Left lung (tissue), 14 donors: ENCODE measurements at regions of chr5 and their contacts with region 1.

Region 1: DNA sequence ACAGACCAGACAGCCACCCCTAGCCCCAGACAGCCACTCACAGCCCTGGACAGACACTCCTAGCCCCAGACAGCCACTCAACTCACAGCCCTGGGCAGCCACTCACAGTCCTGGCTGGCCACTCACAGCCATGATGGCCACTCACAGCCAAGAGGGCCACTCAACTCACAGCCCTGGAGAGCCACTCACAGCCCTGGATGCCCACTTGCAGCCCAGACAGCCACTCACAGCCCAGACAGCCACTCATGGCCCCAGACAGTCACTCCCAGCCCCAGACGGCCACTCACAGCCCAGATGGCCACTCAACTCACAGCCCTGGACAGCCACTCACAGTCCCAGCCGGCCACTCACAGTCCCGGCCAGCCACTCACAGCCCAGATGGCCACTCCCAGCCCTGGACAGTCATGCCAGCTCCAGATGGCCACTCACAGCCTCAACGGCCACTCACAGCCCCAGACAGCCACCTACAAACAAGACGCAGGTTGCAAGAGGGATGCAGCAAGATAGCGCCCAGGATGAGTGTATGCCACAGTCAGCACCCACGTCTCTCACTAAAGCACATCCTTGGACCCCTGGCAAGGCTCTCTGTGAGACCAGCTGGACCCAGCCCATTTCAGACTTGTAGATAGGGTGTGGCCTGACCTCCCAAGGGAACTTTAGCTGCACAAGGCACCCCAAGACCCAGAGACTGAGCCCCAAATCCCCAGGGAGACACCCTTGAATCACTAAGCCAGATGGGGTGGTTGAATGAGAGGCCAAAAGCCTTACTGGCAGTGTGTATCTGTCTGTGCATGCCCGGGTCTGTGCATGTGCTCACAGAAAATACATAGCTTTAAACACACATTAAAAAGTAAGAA is 22.4 kb downstream of the ZDHHC11B start:
- DNase-seq: peak in 2 of 4 donors; percentile 88 to 93
- ATAC-seq: peak; percentile 73
- H3K4me3 ChIP-seq: no peak overlapping the region
- H3K27ac ChIP-seq: peak overlapping the region in 1 of 2 donors; percentile 37
- H3K4me1 ChIP-seq: peaks cover 28 to 30% of the 10 kb centered on the region in 2 donors
- H3K27me3 ChIP-seq: no peaks in the 10 kb centered on the region
- CTCF ChIP-seq: no peak

Region 2: DNA sequence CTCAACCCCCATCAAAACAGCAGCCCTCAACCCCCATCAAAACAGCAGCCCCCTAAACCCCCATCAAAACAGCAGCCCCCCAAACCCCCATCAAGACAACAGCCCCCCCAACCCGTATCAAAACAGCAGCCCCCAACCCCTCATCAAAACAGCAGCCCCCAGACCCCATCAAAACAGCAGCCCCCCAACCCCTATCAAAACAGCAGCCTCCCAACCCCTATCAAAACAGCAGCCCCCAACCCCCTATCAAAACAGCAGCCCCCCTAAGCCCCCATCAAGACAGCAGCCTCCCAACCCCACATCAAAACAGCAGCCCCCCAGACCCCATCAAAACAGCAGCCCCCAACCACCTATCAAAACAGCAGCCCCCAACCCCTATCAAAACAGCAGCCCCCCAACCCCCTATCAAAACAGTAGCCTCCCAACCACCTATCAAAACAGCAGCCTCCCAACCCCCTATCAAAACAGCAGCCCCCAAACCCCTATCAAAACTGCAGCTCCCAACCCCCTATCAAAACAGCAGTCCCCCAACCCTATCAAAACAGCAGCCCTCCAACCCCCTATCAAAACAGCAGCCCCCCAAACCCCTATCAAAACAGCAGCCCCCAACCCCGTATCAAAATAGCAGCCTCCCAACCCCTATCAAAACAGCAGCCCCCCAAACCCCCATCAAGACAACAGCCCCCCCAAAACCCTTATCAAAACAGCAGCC is 70.1 kb before region 1 on chr5:
- intact Hi-C with region 1: loop called in 1 of 2 experiments (anchors 10 kb)
- DNase-seq: no peak
- ATAC-seq: no peak
- H3K4me3 ChIP-seq: no peak overlapping the region
- H3K27ac ChIP-seq: no peak overlapping the region
- H3K4me1 ChIP-seq: no peaks in the 10 kb centered on the region
- H3K27me3 ChIP-seq: peaks cover 0 to 11% of the 10 kb centered on the region in 2 donors
- CTCF ChIP-seq: no peak